Caco-2 (cell line): ENCODE measurements at regions of chr1 and their contacts with region 1.

Region 1: DNA sequence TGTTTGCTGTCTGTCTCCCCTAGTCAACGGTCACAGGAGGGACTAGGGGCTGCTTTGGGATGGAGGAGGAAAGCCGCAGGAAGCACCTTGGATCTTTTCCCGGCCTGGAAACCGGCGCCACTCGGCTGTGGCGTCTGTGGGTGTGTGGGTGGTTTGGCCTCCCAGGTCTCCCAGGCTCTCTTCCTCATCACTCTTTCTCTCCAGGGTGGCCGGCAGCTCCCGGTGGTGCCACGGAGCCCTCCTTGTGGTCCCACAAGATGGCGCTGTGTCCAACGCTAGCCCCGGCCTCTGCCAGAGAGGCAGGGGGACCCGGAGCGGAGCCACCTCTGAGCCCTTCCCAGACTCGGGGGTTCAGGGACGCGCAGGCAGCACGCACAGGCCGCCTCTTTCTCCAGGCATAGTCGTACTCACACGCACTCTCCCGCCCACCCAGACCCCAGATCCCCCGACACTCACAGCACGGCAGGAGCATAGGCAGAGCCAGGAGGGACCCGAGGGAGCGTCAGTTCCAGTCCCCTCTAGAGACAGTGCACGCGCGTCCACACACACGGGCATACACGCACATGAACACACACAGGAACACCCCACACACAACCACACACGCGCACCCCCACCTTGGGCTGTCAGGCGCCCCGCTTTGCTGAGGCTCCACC is 31.2 kb downstream of the CDCP2 start:
- DNase-seq: peak; percentile 63 to 77
- H3K4me3 ChIP-seq: no peak overlapping the region
- H3K4me3 Mint-ChIP-seq: peak overlapping the region; percentile 55
- H3K27ac Mint-ChIP-seq: no peak overlapping the region
- H3K4me1 ChIP-seq: peaks cover 4% of the 10 kb centered on the region; the same call in 1 of the 2 replicates
- H3K4me1 Mint-ChIP-seq: no peaks in the 10 kb centered on the region
- H3K27me3 ChIP-seq: no peaks in the 10 kb centered on the region
- H3K27me3 Mint-ChIP-seq: no peaks in the 10 kb centered on the region
- CTCF ChIP-seq: peak; percentile 33 to 56

Region 2: GRCh38 chr1:54151013-54151412 is 29.4 kb after region 1 on chr1:
- CTCF ChIA-PET with region 1: no interaction called
- POLR2A ChIA-PET with region 1: interaction called, 13 read pairs
- intact Hi-C with region 1: no loop called
- DNase-seq: no peak
- H3K4me3 ChIP-seq: no peak overlapping the region
- H3K4me3 Mint-ChIP-seq: no peak overlapping the region
- H3K27ac Mint-ChIP-seq: no peak overlapping the region
- H3K4me1 ChIP-seq: peaks cover 6% of the 10 kb centered on the region; the same call in 1 of the 2 replicates
- H3K4me1 Mint-ChIP-seq: peaks cover 8% of the 10 kb centered on the region
- H3K27me3 ChIP-seq: no peaks in the 10 kb centered on the region
- H3K27me3 Mint-ChIP-seq: no peaks in the 10 kb centered on the region
- CTCF ChIP-seq: no peak

Region 3: DNA sequence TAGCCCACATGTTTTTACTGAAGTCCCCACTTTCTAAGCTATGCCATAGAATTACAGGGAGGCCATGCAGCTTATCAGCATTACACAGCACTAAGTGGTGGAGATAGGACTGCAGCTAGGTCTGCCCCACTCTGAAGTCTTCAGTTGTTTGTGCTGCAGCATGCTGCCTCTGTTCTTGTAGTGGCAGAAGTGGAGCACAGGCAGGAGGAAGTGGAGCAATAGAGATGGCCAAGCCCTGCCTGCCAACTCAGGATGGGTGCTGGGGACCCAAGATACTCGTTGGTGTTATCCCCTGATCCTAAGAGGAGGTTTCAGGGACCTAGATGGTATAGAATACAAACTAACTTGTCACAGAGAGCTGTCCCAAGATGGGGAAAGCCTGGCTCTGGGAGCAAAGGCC is 91.3 kb after region 1 on chr1:
- CTCF ChIA-PET with region 1: no interaction called
- POLR2A ChIA-PET with region 1: no interaction called
- intact Hi-C with region 1: loop called (anchors 5 kb)
- DNase-seq: no peak
- H3K4me3 ChIP-seq: no peak overlapping the region
- H3K4me3 Mint-ChIP-seq: no peak overlapping the region
- H3K27ac Mint-ChIP-seq: no peak overlapping the region
- H3K4me1 ChIP-seq: no peaks in the 10 kb centered on the region
- H3K4me1 Mint-ChIP-seq: no peaks in the 10 kb centered on the region
- H3K27me3 ChIP-seq: no peaks in the 10 kb centered on the region
- H3K27me3 Mint-ChIP-seq: no peaks in the 10 kb centered on the region
- CTCF ChIP-seq: no peak

Region 4: DNA sequence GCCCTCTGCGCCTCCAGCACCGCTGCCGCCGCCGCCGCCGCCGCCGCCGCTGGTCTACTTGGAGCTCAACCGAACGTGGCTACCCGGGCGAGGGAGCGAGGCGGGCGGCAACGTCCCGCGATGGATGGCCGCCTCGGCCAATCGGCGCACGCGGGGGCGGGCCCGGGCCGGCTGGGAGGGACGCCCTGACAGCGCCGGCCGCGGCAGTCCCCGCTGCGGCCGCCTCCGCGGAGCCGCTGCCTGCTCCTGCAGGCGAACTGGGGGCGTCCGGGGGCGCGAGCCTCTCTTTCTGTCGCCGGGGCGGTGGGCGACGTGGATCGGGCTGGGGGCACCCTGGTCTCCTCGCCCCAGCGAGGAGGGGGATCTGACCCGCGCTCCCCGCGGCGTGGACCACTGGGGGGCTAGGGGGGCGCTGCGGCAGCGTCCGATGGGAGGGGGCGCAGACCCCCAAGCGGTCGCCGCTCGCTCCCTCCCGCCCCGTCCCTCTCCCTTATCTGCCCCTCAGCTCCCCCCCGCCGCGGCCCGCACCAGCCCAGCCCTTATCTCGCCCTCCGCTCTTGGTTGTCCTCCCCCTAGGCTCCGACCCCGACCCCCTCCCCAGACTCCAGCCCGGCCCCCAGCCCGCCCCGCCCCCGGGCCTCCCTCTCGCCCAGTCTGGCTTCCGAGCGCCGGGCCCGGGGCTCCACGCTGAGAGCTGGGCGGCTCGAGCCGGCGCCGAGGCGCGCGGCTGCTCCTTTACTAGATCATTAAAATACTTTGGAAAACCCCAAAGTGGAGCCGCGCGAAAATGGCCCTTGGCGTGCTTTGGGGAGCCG is 284.9 kb after region 1 on chr1 and contains the start of gene SSBP3:
- CTCF ChIA-PET with region 1: no interaction called
- POLR2A ChIA-PET with region 1: no interaction called
- intact Hi-C with region 1: loop called (anchors 10 kb)
- DNase-seq: peak; percentile 87 to 95
- H3K4me3 ChIP-seq: peak within 1 kb of the TSS; percentile 59
- H3K4me3 Mint-ChIP-seq: peak within 1 kb of the TSS; percentile 79
- H3K27ac Mint-ChIP-seq: peak within 1 kb of the TSS; percentile 11
- H3K4me1 ChIP-seq: peaks cover 28% of the 10 kb centered on the region
- H3K4me1 Mint-ChIP-seq: peaks cover 38% of the 10 kb centered on the region
- H3K27me3 ChIP-seq: no peaks in the 10 kb centered on the region
- H3K27me3 Mint-ChIP-seq: no peaks in the 10 kb centered on the region
- CTCF ChIP-seq: no peak
- total RNA-seq, gene SSBP3: 40.6 and 42.1 TPM in 2 replicates

Region 5: DNA sequence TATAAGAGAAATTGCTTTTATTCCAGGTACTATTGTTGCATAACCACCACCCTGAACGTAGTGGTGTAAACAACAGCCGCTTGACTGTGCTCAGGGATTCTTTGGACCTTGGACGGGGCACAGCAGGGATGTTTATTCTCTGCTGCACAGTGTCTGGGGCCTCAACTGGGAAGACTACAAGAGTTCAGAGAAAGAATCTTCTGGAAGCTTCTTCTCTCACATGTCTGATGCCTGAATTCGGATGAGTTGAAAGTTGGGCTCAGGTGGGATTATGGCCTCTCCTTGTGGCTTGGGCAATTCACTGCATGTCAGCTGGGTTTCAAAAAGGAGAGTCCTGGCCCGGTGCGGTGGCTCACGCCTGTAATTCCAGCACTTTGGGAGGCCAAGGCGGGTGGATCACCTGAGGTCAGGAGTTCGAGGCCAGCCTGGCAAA is 303.6 kb after region 1 on chr1:
- CTCF ChIA-PET with region 1: no interaction called
- POLR2A ChIA-PET with region 1: no interaction called
- intact Hi-C with region 1: no loop called
- DNase-seq: no peak
- H3K4me3 ChIP-seq: no peak overlapping the region
- H3K4me3 Mint-ChIP-seq: no peak overlapping the region
- H3K27ac Mint-ChIP-seq: no peak overlapping the region
- H3K4me1 ChIP-seq: no peaks in the 10 kb centered on the region
- H3K4me1 Mint-ChIP-seq: no peaks in the 10 kb centered on the region
- H3K27me3 ChIP-seq: no peaks in the 10 kb centered on the region
- H3K27me3 Mint-ChIP-seq: no peaks in the 10 kb centered on the region
- CTCF ChIP-seq: no peak